ENCODE measurements at regions of chr20 and their contacts with region 1.

Region 1: DNA sequence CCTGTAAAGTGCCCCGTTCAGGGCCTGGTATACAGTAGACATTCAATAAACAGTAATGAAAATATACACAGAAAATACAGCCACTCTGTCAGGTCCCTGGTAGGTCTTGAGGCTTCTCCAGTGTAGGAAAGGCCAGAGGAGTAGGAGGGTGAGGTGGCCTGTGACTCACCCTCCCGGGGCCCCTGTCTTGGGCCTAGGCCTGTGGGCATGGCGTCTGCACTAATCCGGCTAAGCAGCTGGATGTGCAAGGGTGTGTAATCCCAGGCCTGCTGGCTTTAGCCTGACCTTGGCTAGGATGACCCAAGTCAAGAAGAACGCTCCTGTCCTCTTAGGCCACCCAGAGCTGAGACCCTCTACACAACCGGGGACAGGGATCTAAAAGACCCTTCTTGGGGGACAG is 84.9 kb downstream of the KCNB1 start:
- DNase-seq: peak; percentile 59
- H3K4me3 ChIP-seq: no peak overlapping the region
- H3K27ac ChIP-seq: no peak overlapping the region
- H3K4me1 ChIP-seq: peaks cover 5% of the 10 kb centered on the region
- H3K27me3 ChIP-seq: no peaks in the 10 kb centered on the region
- CTCF ChIP-seq: no peak

Region 2: DNA sequence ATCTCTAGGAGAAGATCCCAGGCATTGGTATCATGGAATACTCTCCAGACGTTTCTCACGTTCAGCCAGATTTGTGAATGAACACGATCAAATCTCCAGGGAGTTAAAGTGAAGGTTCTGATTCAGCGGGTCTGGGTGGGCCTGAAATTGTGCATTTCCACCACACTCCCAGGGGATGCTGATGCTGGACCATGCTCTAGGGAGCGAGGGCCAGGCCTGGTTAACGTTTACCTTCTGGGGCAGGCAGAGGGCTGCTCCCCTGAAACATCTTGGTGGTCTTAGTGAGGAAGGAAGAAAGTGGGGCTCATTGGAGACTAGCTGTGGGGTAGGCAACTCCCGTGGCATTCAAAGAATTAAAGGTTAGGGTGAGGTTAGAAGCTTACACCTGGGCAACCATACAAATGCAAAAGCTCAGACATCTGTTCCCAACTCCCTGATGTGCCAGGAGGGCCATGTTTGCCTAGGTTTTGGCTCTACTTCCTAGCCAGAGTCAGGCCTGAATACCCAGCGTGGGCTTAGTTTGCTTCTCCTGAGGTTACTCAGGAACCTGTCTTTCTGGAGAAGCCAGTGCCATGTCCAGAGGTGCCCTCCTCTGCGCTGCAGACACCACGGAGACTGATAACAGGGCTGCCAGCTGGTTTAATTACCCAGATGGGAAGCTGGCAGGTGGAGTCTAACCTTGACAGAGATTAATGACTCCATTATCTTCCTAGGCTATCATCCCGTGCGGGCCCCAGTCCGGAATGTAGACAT is 90.8 kb before region 1 on chr20:
- CTCF ChIA-PET with region 1: no interaction called
- dilution Hi-C with region 1: loop called (anchors 5 kb)
- in situ Hi-C with region 1: no loop called
- intact Hi-C with region 1: no loop called
- DNase-seq: no peak
- H3K4me3 ChIP-seq: no peak overlapping the region
- H3K27ac ChIP-seq: no peak overlapping the region
- H3K4me1 ChIP-seq: no peaks in the 10 kb centered on the region
- H3K27me3 ChIP-seq: no peaks in the 10 kb centered on the region
- CTCF ChIP-seq: no peak

Region 3: GRCh38 chr20:49452011-49452482 is 54.5 kb after region 1 on chr20:
- CTCF ChIA-PET with region 1: no interaction called
- dilution Hi-C with region 1: no loop called
- in situ Hi-C with region 1: loop called in 1 of 2 experiments (anchors 10 kb)
- intact Hi-C with region 1: no loop called
- DNase-seq: no peak
- H3K4me3 ChIP-seq: no peak overlapping the region
- H3K27ac ChIP-seq: no peak overlapping the region
- H3K4me1 ChIP-seq: peaks cover 5% of the 10 kb centered on the region
- H3K27me3 ChIP-seq: peaks cover 10% of the 10 kb centered on the region
- CTCF ChIP-seq: no peak

Region 4: GRCh38 chr20:49896204-49896979 is 498.9 kb after region 1 on chr20:
- CTCF ChIA-PET with region 1: no interaction called
- dilution Hi-C with region 1: loop called (anchors 5 kb)
- in situ Hi-C with region 1: no loop called
- intact Hi-C with region 1: no loop called
- DNase-seq: no peak
- H3K4me3 ChIP-seq: no peak overlapping the region
- H3K27ac ChIP-seq: no peak overlapping the region
- H3K4me1 ChIP-seq: no peaks in the 10 kb centered on the region
- H3K27me3 ChIP-seq: no peaks in the 10 kb centered on the region
- CTCF ChIP-seq: no peak